A673 (cell line): ENCODE measurements at regions of chr20 and their contacts with region 1.

Region 1: GRCh38 chr20:38645980-38646858 is 44.6 kb downstream of the ARHGAP40 start:
- DNase-seq: peak; percentile 84
- H3K4me3 ChIP-seq: peak overlapping the region; percentile 19
- H3K27ac ChIP-seq: no peak overlapping the region
- H3K4me1 ChIP-seq: no peaks in the 10 kb centered on the region
- H3K27me3 ChIP-seq: peaks cover 26% of the 10 kb centered on the region
- CTCF ChIP-seq: peak; percentile 96

Region 2: DNA sequence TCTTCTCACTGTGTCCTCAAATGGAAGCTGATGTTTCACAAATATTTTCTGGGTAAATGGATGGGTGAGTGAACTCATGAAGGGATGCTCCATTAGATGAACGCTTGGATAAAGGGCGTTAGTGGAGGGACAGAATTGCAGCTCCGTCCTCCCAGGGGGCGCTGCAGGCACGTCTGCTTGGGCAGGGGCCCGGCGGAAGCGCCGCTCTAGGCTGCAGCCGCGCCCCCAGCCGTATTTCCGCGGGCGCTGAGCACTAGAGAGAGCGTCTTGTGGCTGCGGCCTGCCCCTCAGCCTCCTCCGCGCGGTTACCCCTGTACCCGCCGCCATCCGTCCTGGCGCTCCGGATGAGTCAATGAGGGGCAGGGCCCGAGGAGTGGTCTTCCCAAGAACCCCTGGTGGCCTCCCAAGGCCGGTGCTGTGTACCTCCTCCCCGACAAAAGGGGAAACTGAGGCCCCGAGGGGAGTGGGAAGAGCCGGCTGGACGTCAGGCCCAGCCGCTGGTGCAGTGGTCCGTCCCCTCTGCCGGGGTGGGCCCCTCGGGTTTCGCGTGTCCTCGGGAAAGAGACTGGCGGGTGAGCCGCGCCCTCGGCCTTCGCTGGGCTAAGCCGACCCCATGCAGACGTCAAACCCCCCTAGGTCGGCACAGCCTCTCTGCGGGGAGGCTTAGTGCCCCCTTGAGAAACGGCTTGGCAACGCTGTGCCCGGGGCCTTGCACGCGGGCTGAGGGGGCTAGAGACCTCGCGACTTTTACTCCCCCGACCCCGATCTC is 199.6 kb before region 1 on chr20:
- CTCF ChIA-PET with region 1: no interaction called
- POLR2A ChIA-PET with region 1: no interaction called
- intact Hi-C with region 1: no loop called
- DNase-seq: peak; percentile 96
- H3K4me3 ChIP-seq: peak overlapping the region; percentile 90
- H3K27ac ChIP-seq: peak overlapping the region; percentile 95
- H3K4me1 ChIP-seq: peaks cover 10% of the 10 kb centered on the region
- H3K27me3 ChIP-seq: no peaks in the 10 kb centered on the region
- CTCF ChIP-seq: peak; percentile 96

Region 3: GRCh38 chr20:38485041-38485440 is 161.2 kb before region 1 on chr20:
- CTCF ChIA-PET with region 1: no interaction called
- POLR2A ChIA-PET with region 1: no interaction called
- intact Hi-C with region 1: no loop called
- DNase-seq: no peak
- H3K4me3 ChIP-seq: no peak overlapping the region
- H3K27ac ChIP-seq: no peak overlapping the region
- H3K4me1 ChIP-seq: no peaks in the 10 kb centered on the region
- H3K27me3 ChIP-seq: no peaks in the 10 kb centered on the region
- CTCF ChIP-seq: no peak

Region 4: DNA sequence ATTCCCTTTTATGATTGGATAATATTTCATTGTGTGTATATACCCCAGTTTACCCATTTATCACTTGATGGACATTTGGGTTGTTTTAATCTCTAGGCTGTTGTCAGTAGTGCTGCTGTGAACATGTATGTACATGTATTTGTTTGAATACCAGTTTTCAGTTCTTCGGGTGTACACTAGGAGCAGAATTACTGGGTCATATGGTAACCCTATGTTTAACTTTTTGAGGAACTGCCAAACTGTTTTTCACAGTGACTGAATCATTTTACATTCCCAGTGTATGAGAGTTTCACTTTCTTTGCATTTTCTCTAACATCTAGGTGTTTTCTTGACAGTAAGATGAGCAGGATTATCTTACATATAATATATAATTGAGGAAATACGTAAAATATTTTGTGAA is 109.9 kb before region 1 on chr20:
- CTCF ChIA-PET with region 1: no interaction called
- POLR2A ChIA-PET with region 1: no interaction called
- intact Hi-C with region 1: no loop called
- DNase-seq: no peak
- H3K4me3 ChIP-seq: no peak overlapping the region
- H3K27ac ChIP-seq: no peak overlapping the region
- H3K4me1 ChIP-seq: no peaks in the 10 kb centered on the region
- H3K27me3 ChIP-seq: no peaks in the 10 kb centered on the region
- CTCF ChIP-seq: no peak

Region 5: GRCh38 chr20:38730989-38731737 is 84.9 kb after region 1 on chr20:
- CTCF ChIA-PET with region 1: interaction called, 3 read pairs
- POLR2A ChIA-PET with region 1: no interaction called
- intact Hi-C with region 1: loop called (anchors 5 kb)
- DNase-seq: peak; percentile 82
- H3K4me3 ChIP-seq: peak overlapping the region; percentile 36
- H3K27ac ChIP-seq: no peak overlapping the region
- H3K4me1 ChIP-seq: peaks cover 9% of the 10 kb centered on the region
- H3K27me3 ChIP-seq: peaks cover 96% of the 10 kb centered on the region
- CTCF ChIP-seq: peak; percentile 99

Region 6: GRCh38 chr20:38751360-38751976 is 105.2 kb after region 1 on chr20:
- CTCF ChIA-PET with region 1: interaction called, 3 read pairs
- POLR2A ChIA-PET with region 1: no interaction called
- intact Hi-C with region 1: loop called (anchors 1 kb)
- DNase-seq: peak; percentile 41
- H3K4me3 ChIP-seq: no peak overlapping the region
- H3K27ac ChIP-seq: no peak overlapping the region
- H3K4me1 ChIP-seq: peaks cover 6% of the 10 kb centered on the region
- H3K27me3 ChIP-seq: no peaks in the 10 kb centered on the region
- CTCF ChIP-seq: peak; percentile 71

Region 7: GRCh38 chr20:38893565-38894090 is 247.4 kb after region 1 on chr20:
- CTCF ChIA-PET with region 1: no interaction called
- POLR2A ChIA-PET with region 1: no interaction called
- intact Hi-C with region 1: loop called (anchors 2 kb)
- DNase-seq: peak; percentile 46
- H3K4me3 ChIP-seq: no peak overlapping the region
- H3K27ac ChIP-seq: no peak overlapping the region
- H3K4me1 ChIP-seq: no peaks in the 10 kb centered on the region
- H3K27me3 ChIP-seq: peaks cover 28% of the 10 kb centered on the region
- CTCF ChIP-seq: peak; percentile 89

Region 8: DNA sequence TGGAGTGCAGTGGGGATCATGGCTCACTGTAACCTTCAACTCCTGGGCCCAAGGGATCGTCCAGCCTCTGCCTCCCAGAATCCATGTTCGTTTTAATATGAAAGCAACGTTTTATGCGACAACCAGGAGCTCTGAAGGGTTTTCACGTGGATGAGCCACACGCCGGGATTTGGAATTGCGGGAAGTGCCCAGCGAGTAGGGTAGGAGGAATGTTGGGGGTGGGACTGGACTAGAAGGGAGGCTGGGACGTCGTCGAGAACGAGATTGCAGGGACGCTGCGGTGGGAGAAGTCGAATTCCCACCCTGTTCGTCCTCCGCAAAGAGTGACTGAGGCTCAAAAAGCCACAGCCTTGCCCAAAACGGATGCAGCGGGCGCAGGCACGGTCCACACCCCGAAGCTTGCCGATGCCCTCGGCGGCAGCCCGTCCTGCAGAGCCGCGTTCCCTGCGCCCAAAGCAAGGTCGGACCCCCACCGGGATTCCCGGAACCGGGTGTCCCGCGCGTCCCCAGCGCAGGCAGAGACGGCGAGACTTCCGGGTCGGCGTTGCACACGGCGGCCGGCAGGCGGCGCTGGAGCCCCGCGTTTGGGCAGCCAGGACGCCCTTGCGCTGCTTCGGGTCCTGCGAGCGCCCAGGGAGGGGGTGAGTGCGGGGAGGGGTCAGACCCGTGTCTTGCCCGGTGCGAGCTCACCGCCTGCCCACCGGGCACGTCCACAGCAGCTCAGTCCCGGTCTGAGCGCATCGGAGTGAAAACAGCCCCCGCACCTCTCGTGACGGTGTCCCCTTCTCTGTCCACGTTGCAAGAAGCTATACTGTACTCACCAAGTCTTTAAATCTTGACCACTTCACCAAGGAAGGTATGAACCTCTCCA is 403.7 kb after region 1 on chr20:
- CTCF ChIA-PET with region 1: no interaction called
- POLR2A ChIA-PET with region 1: no interaction called
- intact Hi-C with region 1: loop called (anchors 5 kb)
- DNase-seq: peak; percentile 80
- H3K4me3 ChIP-seq: peak overlapping the region; percentile 56
- H3K27ac ChIP-seq: peak overlapping the region; percentile 57
- H3K4me1 ChIP-seq: no peaks in the 10 kb centered on the region
- H3K27me3 ChIP-seq: no peaks in the 10 kb centered on the region
- CTCF ChIP-seq: peak; percentile 98